Activated T-helper 2 cell treated with anti-CD3 and anti-CD28 coated beads, Interferon-gamma antibody, Interleukin-2, Interleukin-4, amounts not matched to agents 10 μg/mL and 5 μg/mL and 100 μg/mL, durations not matched to agents 14 hours and 24 hours and 36 hours (primary cell): ENCODE measurements at regions of chr17 and their contacts with region 1.

Region 1: DNA sequence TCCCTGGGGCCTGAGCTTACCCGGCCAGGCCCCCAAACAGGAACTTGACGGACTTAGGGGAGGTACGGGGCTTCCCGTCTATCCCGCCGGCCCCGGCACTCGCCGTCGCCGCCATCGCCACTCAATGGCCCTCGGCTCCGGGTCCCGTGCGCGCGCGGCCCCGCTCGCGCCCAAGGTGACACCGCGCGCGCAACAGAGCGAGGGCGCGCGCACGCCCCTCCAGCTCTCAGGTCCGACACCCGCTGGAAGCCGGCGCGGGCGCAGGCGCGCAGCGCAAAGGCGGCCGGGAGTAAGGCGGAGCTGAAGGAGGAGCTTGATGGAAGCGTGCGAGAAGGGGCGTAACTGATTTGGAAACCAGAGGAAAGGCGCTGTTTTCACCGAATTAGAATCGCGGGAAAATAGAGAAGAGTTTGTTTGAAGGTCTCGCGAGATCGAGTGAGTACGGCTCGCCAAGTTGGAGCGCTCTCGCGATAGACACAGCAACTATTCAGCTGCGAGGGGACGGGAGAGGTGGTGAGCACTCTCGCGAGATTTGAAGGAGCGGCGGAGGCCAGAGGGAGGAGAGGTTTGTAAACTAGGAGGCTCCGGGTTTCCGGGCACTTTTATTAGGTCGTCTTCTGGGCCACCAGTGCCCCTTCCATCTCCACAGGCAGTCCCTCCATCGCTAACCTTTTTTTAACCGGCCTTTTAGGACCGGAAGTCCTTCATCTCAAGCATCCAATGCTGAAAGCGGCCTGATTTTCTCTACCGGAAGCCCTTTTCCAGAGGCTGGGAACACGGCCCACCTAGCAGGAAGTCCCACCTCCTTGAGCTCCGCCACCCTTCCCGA is at the starts of genes RNF167 and SLC25A11:
- DNase-seq: peak; percentile 98
- H3K4me3 Mint-ChIP-seq: peak within 1 kb of the TSS; percentile 100
- H3K27ac Mint-ChIP-seq: peak within 1 kb of the TSS; percentile 87
- H3K4me1 Mint-ChIP-seq: peaks cover 48% of the 10 kb centered on the region
- H3K27me3 Mint-ChIP-seq: no peaks in the 10 kb centered on the region
- total RNA-seq, gene RNF167: 112 and 126 TPM in 2 replicates
- total RNA-seq, gene SLC25A11: 91.4 and 103 TPM in 2 replicates

Region 2: GRCh38 chr17:4366327-4367063 is 573.5 kb before region 1 on chr17 and contains the start of gene UBE2G1:
- intact Hi-C with region 1: loop called (anchors 10 kb)
- DNase-seq: peak; percentile 98
- H3K4me3 Mint-ChIP-seq: peak within 1 kb of the TSS; percentile 67
- H3K27ac Mint-ChIP-seq: peak within 1 kb of the TSS; percentile 94
- H3K4me1 Mint-ChIP-seq: peaks cover 22% of the 10 kb centered on the region
- H3K27me3 Mint-ChIP-seq: no peaks in the 10 kb centered on the region
- total RNA-seq, gene UBE2G1: 74.1 and 74.5 TPM in 2 replicates

Region 3: DNA sequence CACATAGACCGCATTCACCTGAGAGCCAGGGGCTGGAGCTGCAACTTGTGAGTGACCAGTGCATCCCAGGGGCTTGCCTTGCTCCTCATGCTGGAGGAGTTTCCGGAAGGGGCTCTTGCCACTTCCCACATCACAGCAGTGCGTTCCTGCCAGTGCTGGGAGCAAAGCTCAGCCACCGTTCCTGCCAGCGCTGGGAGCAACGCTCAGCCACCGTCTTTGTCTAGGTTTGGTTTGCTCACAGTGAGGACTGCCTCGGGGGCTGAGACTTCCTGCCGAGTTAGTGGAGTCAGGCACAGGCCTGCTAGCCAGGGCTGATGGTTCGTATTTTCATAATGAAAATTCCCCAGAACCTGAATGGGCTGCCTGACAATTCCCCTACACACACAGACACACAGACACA is 31.7 kb before region 1 on chr17:
- intact Hi-C with region 1: loop called (anchors 1 kb)
- DNase-seq: no peak
- H3K4me3 Mint-ChIP-seq: no peak overlapping the region
- H3K27ac Mint-ChIP-seq: no peak overlapping the region
- H3K4me1 Mint-ChIP-seq: peaks cover 4% of the 10 kb centered on the region
- H3K27me3 Mint-ChIP-seq: peaks cover 3% of the 10 kb centered on the region

Region 4: GRCh38 chr17:4967539-4968165 is 27.6 kb after region 1 on chr17 and contains the start of gene SPAG7:
- intact Hi-C with region 1: loop called (anchors 1 kb)
- DNase-seq: peak; percentile 94
- H3K4me3 Mint-ChIP-seq: no peak within 1 kb of the TSS
- H3K27ac Mint-ChIP-seq: peak within 1 kb of the TSS; percentile 72
- H3K4me1 Mint-ChIP-seq: peaks cover 35% of the 10 kb centered on the region
- H3K27me3 Mint-ChIP-seq: no peaks in the 10 kb centered on the region
- total RNA-seq, gene SPAG7: 66.5 and 70.4 TPM in 2 replicates

Region 5: DNA sequence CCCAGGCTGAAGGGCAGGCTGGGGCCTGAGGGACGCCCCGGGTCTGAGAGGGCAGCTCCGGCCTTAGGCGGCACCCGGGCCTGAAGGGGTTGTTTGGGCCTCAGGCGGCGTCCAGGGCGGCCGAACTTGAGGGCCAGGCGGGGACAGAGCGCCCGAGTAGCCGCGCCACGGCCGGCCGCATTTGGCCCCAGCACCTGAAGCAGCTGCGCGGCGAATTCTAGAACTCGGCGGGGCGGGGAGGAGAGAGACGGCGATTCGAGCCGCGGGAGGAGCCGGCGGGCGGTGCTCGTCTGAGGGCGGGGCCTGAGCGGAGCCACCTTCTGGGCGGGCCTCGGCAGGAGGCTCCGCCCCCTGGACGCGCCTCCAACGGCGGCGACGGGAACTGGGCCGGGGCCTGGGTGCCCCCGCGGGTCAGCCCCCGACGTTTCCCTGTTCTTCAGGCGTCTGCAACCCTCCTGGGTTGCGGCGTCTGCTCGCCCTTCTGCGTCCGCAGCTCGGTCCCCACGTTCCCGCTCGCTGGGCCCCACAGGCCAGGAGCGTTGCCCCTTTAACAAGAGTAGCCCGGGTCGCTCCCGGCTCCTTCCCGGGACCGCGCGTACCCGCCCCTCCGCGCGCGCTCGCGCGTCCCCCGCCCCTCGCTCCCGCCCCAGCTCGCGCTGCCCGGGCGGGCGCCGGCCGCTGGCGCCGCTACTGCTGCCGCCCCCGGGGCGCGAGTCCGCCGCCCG is 57.5 kb after region 1 on chr17 and contains the starts of genes INCA1 and KIF1C:
- intact Hi-C with region 1: loop called (anchors 2 kb)
- DNase-seq: peak; percentile 89
- H3K4me3 Mint-ChIP-seq: peak within 1 kb of the TSS; percentile 86
- H3K27ac Mint-ChIP-seq: peak within 1 kb of the TSS; percentile 62
- H3K4me1 Mint-ChIP-seq: peaks cover 12% of the 10 kb centered on the region
- H3K27me3 Mint-ChIP-seq: no peaks in the 10 kb centered on the region
- total RNA-seq, gene INCA1: 0.43 and 0.53 TPM in 2 replicates
- total RNA-seq, gene KIF1C: 51.0 and 51.4 TPM in 2 replicates

Region 6: GRCh38 chr17:5065227-5065744 is 125.3 kb after region 1 on chr17:
- intact Hi-C with region 1: loop called (anchors 1 kb)
- DNase-seq: no peak
- H3K4me3 Mint-ChIP-seq: no peak overlapping the region
- H3K27ac Mint-ChIP-seq: no peak overlapping the region
- H3K4me1 Mint-ChIP-seq: peaks cover 4% of the 10 kb centered on the region
- H3K27me3 Mint-ChIP-seq: peaks cover 8% of the 10 kb centered on the region